ENCODE measurements at regions of chr4 and their contacts with region 1.

Region 1: DNA sequence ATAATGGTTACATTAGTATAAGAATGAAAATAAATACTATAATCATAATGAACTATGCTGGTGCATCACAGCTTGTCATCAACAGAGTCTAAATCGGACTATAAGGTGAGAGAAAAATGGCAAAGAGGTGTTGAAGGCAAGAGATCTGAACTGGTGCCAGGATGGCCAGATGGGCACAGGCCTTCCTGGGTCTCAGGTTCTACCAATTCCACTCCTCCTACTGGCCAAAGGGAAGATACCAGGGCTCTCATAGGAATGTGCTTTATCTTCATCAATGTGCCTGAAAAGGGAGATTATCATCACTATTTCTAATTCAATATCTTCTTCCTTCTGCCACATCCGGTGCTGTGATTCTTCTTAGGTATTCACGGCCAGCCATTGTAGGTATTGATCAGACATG is 107.6 kb downstream of the GASK1B start:
- DNase-seq: no peak
- ATAC-seq: no peak

Region 2: DNA sequence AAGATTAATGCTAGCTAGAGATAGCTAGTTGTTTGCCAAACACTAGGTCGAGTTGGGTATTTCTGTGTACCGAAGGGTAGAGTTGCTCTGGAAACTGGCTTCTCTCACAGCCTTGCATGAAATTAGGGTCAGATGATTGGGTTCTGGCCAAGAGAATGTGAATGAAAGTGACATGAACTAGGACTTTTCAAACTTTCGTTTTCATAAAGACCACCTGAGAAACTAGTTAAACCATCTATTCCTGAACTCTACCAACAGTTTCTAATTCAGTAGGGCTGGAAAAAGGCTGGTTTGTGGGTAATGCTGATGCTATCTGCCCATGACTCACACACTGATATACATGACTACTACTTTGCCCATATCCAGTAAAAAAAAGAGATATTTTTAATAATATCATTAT is 49.9 kb before region 1 on chr4:
- intact Hi-C with region 1: loop called (anchors 10 kb)
- DNase-seq: no peak
- ATAC-seq: no peak

Region 3: DNA sequence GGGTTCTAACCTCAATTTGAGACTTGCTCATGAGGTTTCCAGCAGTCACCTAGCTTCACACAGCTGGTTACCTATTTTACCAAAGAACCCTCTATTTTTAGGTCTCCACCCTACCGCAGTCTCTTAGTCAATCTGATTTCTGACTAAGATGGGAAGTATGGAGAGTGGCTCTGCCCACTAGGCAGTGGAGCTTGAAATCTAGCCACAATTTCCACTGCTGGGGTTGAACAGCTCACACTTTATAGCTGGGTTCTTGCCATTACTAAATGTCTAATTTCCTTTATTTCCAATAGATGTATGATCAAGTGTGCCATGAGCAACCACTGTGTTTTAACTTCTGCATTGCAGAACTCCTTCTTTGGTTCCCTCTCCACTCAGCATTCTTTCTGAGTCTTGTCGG is 64.5 kb after region 1 on chr4:
- intact Hi-C with region 1: no loop called
- DNase-seq: no peak
- ATAC-seq: no peak

Measured in Right ventricle myocardium superior (tissue), 1 donor.